PC-3 (cell line): ENCODE measurements at regions of chr2 and their contacts with region 1.

Region 1: GRCh38 chr2:228657807-228658402 is 476.4 kb upstream of the SPHKAP start:
- DNase-seq: peak; percentile 76
- ATAC-seq: peak; percentile 33; the same call in 1 of the 2 replicates
- H3K4me3 ChIP-seq: peak overlapping the region; percentile 6; the same call in 1 of the 2 replicates
- H3K27ac ChIP-seq: no peak overlapping the region
- H3K4me1 ChIP-seq: peaks cover 33% of the 10 kb centered on the region
- H3K27me3 ChIP-seq: no peaks in the 10 kb centered on the region
- CTCF ChIP-seq: peak; percentile 79

Region 2: DNA sequence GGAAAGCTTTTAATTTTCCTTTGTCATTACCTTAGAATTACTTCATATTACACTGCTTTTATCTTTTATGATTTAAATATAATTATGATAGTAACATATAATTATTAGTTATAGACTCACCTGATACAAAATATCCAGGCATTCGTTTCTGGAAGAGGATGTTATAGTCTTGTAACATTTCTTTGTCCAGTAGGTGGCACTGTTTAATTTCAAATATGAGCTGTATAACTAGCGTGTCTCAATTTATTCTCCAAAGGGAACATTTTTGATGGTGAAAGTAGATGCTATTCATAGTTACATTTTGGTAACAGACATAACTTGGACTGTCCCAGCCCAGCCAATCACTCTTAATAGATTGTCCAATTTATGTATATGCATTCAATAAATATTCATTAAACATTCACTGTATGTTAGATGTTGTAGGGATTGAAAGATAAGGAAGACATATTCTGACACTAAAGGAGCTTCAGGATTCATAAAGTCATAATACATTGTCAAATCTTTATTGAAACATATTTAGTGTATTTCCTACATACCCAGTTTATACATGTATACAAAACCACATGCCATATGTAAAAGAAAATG is 767.3 kb before region 1 on chr2:
- CTCF ChIA-PET with region 1: no interaction called
- POLR2A ChIA-PET with region 1: no interaction called
- intact Hi-C with region 1: loop called (anchors 2 kb)
- DNase-seq: peak; percentile 80
- ATAC-seq: peak; percentile 80
- H3K4me3 ChIP-seq: no peak overlapping the region
- H3K27ac ChIP-seq: no peak overlapping the region
- H3K4me1 ChIP-seq: peaks cover 6% of the 10 kb centered on the region; the same call in 1 of the 2 replicates
- H3K27me3 ChIP-seq: no peaks in the 10 kb centered on the region
- CTCF ChIP-seq: peak; percentile 66

Region 3: DNA sequence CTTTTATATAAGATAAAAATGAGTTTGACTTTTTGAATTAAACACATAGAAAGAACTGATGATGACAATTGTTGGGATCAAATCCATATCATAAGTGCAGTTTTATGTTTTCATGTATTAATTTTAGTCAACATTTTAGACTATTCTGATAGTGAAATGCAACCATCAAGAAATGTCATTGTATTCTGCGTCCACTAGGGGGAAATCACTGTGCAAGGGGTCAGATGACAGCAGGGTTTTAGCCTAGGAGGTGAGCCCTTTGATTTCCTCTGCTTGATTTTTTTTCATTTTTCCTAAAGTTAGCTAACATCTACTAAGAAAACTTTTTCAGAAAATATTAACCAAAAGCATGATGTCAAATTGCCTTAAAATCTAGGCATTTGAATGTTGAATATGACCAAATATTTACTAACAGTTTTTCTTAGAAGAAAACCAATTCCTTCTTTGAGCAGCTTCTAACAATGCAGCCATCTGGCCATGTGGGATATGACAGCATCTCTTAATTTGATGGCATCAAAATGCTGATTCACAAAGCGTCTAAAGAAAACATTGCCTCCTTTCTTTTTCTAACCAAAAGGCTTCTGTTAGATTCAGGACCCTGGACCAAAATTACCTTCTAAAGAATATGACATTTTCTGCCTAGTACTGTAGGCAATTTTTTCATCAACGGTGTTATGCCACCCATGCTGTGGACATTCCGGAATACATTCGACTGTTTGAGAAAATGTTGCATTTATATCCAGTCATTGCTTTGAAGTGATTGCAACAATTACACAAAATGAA is 618.0 kb before region 1 on chr2:
- CTCF ChIA-PET with region 1: no interaction called
- POLR2A ChIA-PET with region 1: no interaction called
- intact Hi-C with region 1: loop called (anchors 2 kb)
- DNase-seq: peak; percentile 51
- ATAC-seq: peak; percentile 58
- H3K4me3 ChIP-seq: no peak overlapping the region
- H3K27ac ChIP-seq: no peak overlapping the region
- H3K4me1 ChIP-seq: no peaks in the 10 kb centered on the region
- H3K27me3 ChIP-seq: no peaks in the 10 kb centered on the region
- CTCF ChIP-seq: peak; percentile 84

Region 4: GRCh38 chr2:228164718-228165117 is 493.2 kb before region 1 on chr2:
- CTCF ChIA-PET with region 1: no interaction called
- POLR2A ChIA-PET with region 1: no interaction called
- intact Hi-C with region 1: no loop called
- DNase-seq: no peak
- ATAC-seq: no peak
- H3K4me3 ChIP-seq: no peak overlapping the region
- H3K27ac ChIP-seq: no peak overlapping the region
- H3K4me1 ChIP-seq: no peaks in the 10 kb centered on the region
- H3K27me3 ChIP-seq: 0 out of 2 replicates have a peak, but pooled peaks cover 14% of the 10 kb centered on the region
- CTCF ChIP-seq: no peak

Region 5: GRCh38 chr2:228318218-228318617 is 339.7 kb before region 1 on chr2:
- CTCF ChIA-PET with region 1: interaction called, 3 read pairs
- POLR2A ChIA-PET with region 1: no interaction called
- intact Hi-C with region 1: loop called (anchors 1 kb)
- DNase-seq: peak; percentile 72
- ATAC-seq: peak; percentile 77
- H3K4me3 ChIP-seq: no peak overlapping the region
- H3K27ac ChIP-seq: no peak overlapping the region
- H3K4me1 ChIP-seq: no peaks in the 10 kb centered on the region
- H3K27me3 ChIP-seq: peaks cover 16% of the 10 kb centered on the region; the same call in 1 of the 2 replicates
- CTCF ChIP-seq: peak; percentile 73

Region 6: GRCh38 chr2:228493852-228494251 is 164.1 kb before region 1 on chr2:
- CTCF ChIA-PET with region 1: no interaction called
- POLR2A ChIA-PET with region 1: no interaction called
- intact Hi-C with region 1: loop called (anchors 10 kb)
- DNase-seq: no peak
- ATAC-seq: no peak
- H3K4me3 ChIP-seq: no peak overlapping the region
- H3K27ac ChIP-seq: no peak overlapping the region
- H3K4me1 ChIP-seq: no peaks in the 10 kb centered on the region
- H3K27me3 ChIP-seq: no peaks in the 10 kb centered on the region
- CTCF ChIP-seq: no peak

Region 7: GRCh38 chr2:228699400-228699799 is 41.5 kb after region 1 on chr2:
- CTCF ChIA-PET with region 1: no interaction called
- POLR2A ChIA-PET with region 1: no interaction called
- intact Hi-C with region 1: no loop called
- DNase-seq: peak; percentile 5
- ATAC-seq: peak; percentile 45; the same call in 1 of the 2 replicates
- H3K4me3 ChIP-seq: no peak overlapping the region
- H3K27ac ChIP-seq: no peak overlapping the region
- H3K4me1 ChIP-seq: peaks cover 19% of the 10 kb centered on the region
- H3K27me3 ChIP-seq: no peaks in the 10 kb centered on the region
- CTCF ChIP-seq: peak; percentile 47; the same call in 1 of the 2 replicates

Region 8: DNA sequence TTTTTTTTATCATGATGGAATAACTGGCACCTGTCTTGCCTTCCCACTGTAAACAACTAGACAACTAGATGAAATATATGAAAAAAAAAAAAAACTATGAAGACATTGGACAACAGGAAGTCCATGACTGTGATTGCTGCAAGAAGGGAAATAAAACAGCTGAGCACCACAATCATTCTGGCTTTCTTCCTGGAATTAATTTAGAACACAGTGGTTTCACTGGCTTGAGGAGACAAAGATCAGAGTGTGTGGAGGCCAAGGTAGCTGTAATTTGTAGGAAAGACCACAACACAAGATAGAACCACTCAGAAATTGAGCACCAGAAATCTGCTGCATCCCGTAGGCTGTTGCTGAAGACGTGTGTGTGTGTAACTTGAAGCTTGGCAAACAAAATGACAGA is 734.3 kb after region 1 on chr2:
- CTCF ChIA-PET with region 1: no interaction called
- POLR2A ChIA-PET with region 1: no interaction called
- intact Hi-C with region 1: no loop called
- DNase-seq: no peak
- ATAC-seq: no peak
- H3K4me3 ChIP-seq: no peak overlapping the region
- H3K27ac ChIP-seq: no peak overlapping the region
- H3K4me1 ChIP-seq: no peaks in the 10 kb centered on the region
- H3K27me3 ChIP-seq: no peaks in the 10 kb centered on the region
- CTCF ChIP-seq: no peak